PC-3 (cell line): ENCODE measurements at regions of chr6 and their contacts with region 1.

Region 1: DNA sequence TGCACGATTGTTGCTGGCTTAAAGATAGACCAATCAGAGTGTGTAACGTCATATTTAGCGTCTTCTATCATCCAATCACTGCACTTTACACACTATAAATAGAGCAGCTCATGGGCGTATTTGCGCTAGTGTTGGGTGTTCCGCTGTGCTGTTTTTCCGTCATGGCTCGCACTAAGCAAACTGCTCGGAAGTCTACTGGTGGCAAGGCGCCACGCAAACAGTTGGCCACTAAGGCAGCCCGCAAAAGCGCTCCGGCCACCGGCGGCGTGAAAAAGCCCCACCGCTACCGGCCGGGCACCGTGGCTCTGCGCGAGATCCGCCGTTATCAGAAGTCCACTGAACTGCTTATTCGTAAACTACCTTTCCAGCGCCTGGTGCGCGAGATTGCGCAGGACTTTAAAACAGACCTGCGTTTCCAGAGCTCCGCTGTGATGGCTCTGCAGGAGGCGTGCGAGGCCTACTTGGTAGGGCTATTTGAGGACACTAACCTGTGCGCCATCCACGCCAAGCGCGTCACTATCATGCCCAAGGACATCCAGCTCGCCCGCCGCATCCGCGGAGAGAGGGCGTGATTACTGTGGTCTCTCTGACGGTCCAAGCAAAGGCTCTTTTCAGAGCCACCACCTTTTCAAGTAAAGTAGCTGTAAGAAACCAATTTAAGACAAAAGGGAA is 57.9 kb downstream of the TRIM38 start:
- DNase-seq: peak; percentile 97
- ATAC-seq: peak; percentile 59
- H3K4me3 ChIP-seq: peak overlapping the region; percentile 96
- H3K27ac ChIP-seq: peak overlapping the region; percentile 90
- H3K4me1 ChIP-seq: peaks cover 27% of the 10 kb centered on the region
- H3K27me3 ChIP-seq: no peaks in the 10 kb centered on the region
- CTCF ChIP-seq: no peak

Region 2: GRCh38 chr6:27126815-27127537 is 1106.5 kb after region 1 on chr6:
- CTCF ChIA-PET with region 1: no interaction called
- POLR2A ChIA-PET with region 1: interaction called, 14 read pairs
- intact Hi-C with region 1: no loop called
- DNase-seq: peak; percentile 95
- ATAC-seq: peak; percentile 83
- H3K4me3 ChIP-seq: peak overlapping the region; percentile 59
- H3K27ac ChIP-seq: no peak overlapping the region
- H3K4me1 ChIP-seq: peaks cover 30% of the 10 kb centered on the region
- H3K27me3 ChIP-seq: no peaks in the 10 kb centered on the region
- CTCF ChIP-seq: peak; percentile 92